MCF 10A (cell line): ENCODE measurements at regions of chr7 and their contacts with region 1.

Region 1: GRCh38 chr7:127253281-127254162 is 781 bp upstream of the GRM8 start:
- DNase-seq: peak; percentile 47
- H3K4me3 Mint-ChIP-seq: peak overlapping the region; percentile 77
- H3K27ac Mint-ChIP-seq: no peak overlapping the region
- H3K4me1 Mint-ChIP-seq: peaks cover 8% of the 10 kb centered on the region
- H3K27me3 Mint-ChIP-seq: peaks cover 63% of the 10 kb centered on the region
- CTCF ChIP-seq: peak; percentile 94

Region 2: GRCh38 chr7:126803060-126803665 is 450.4 kb before region 1 on chr7:
- CTCF ChIA-PET with region 1: interaction called, 31 read pairs
- POLR2A ChIA-PET with region 1: no interaction called
- intact Hi-C with region 1: loop called (anchors 1 kb)
- DNase-seq: peak; percentile 74
- H3K4me3 Mint-ChIP-seq: no peak overlapping the region
- H3K27ac Mint-ChIP-seq: no peak overlapping the region
- H3K4me1 Mint-ChIP-seq: no peaks in the 10 kb centered on the region
- H3K27me3 Mint-ChIP-seq: peaks cover 25% of the 10 kb centered on the region
- CTCF ChIP-seq: peak; percentile 78

Region 3: DNA sequence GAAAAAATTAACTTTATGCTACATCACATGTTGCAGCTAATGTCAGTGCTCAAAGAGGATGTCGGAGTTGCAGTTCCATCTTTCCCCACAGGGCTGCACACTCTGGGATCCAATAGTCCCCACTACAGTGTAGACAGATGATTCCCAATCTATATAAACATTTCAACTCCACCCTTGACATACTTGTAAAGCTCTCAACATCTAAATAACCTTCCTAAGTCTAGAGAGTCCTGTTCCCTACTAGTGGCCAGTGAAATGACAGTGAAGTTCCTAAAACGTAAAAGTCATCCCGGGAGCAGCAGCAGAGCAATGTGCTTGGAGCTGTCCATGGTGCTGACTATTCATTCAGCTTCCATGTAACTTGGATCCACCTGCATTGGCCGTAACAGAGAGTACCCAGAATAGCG is 145.9 kb before region 1 on chr7:
- CTCF ChIA-PET with region 1: interaction called, 3 read pairs
- POLR2A ChIA-PET with region 1: no interaction called
- intact Hi-C with region 1: loop called (anchors 1 kb)
- DNase-seq: peak; percentile 81
- H3K4me3 Mint-ChIP-seq: no peak overlapping the region
- H3K27ac Mint-ChIP-seq: no peak overlapping the region
- H3K4me1 Mint-ChIP-seq: no peaks in the 10 kb centered on the region
- H3K27me3 Mint-ChIP-seq: no peaks in the 10 kb centered on the region
- CTCF ChIP-seq: peak; percentile 67

Region 4: GRCh38 chr7:127270093-127270492 is 16.6 kb after region 1 on chr7:
- CTCF ChIA-PET with region 1: interaction called, 30 read pairs
- POLR2A ChIA-PET with region 1: interaction called, 3 read pairs
- intact Hi-C with region 1: no loop called
- DNase-seq: no peak
- H3K4me3 Mint-ChIP-seq: no peak overlapping the region
- H3K27ac Mint-ChIP-seq: no peak overlapping the region
- H3K4me1 Mint-ChIP-seq: no peaks in the 10 kb centered on the region
- H3K27me3 Mint-ChIP-seq: peaks cover 63% of the 10 kb centered on the region
- CTCF ChIP-seq: no peak

Region 5: GRCh38 chr7:127322351-127322750 is 68.8 kb after region 1 on chr7:
- CTCF ChIA-PET with region 1: interaction called, 10 read pairs
- POLR2A ChIA-PET with region 1: no interaction called
- intact Hi-C with region 1: no loop called
- DNase-seq: no peak
- H3K4me3 Mint-ChIP-seq: no peak overlapping the region
- H3K27ac Mint-ChIP-seq: no peak overlapping the region
- H3K4me1 Mint-ChIP-seq: peaks cover 12% of the 10 kb centered on the region
- H3K27me3 Mint-ChIP-seq: peaks cover 62% of the 10 kb centered on the region
- CTCF ChIP-seq: no peak

Region 6: GRCh38 chr7:127365164-127365956 is 111.8 kb after region 1 on chr7:
- CTCF ChIA-PET with region 1: no interaction called
- POLR2A ChIA-PET with region 1: no interaction called
- intact Hi-C with region 1: no loop called
- DNase-seq: no peak
- H3K4me3 Mint-ChIP-seq: no peak overlapping the region
- H3K27ac Mint-ChIP-seq: no peak overlapping the region
- H3K4me1 Mint-ChIP-seq: no peaks in the 10 kb centered on the region
- H3K27me3 Mint-ChIP-seq: no peaks in the 10 kb centered on the region
- CTCF ChIP-seq: no peak

Region 7: GRCh38 chr7:127585044-127585953 is 331.8 kb after region 1 on chr7 and contains the start of gene GCC1:
- CTCF ChIA-PET with region 1: no interaction called
- POLR2A ChIA-PET with region 1: no interaction called
- intact Hi-C with region 1: no loop called
- DNase-seq: peak; percentile 80
- H3K4me3 Mint-ChIP-seq: peak within 1 kb of the TSS; percentile 79
- H3K27ac Mint-ChIP-seq: peak within 1 kb of the TSS; percentile 90
- H3K4me1 Mint-ChIP-seq: peaks cover 38% of the 10 kb centered on the region
- H3K27me3 Mint-ChIP-seq: no peaks in the 10 kb centered on the region
- CTCF ChIP-seq: no peak
- total RNA-seq, gene GCC1: 27.7 and 30.2 TPM in 2 replicates